ENCODE measurements at regions of chr4 and their contacts with region 1.

Region 1: GRCh38 chr4:145180298-145181090 is at the start of gene OTUD4:
- DNase-seq: peak; percentile 88 to 98 (median 94)
- ATAC-seq: peak; percentile 83
- H3K4me3 ChIP-seq: peak within 1 kb of the TSS; percentile 88
- H3K4me3 Mint-ChIP-seq: peak within 1 kb of the TSS; percentile 99
- H3K27ac ChIP-seq: peak within 1 kb of the TSS; percentile 92 to 95
- H3K27ac Mint-ChIP-seq: peak within 1 kb of the TSS; percentile 99
- H3K4me1 ChIP-seq: peaks cover 33% of the 10 kb centered on the region
- H3K4me1 Mint-ChIP-seq: peaks cover 38% of the 10 kb centered on the region
- H3K27me3 ChIP-seq: no peaks in the 10 kb centered on the region
- H3K27me3 Mint-ChIP-seq: no peaks in the 10 kb centered on the region
- CTCF ChIP-seq: no peak
- total RNA-seq, gene OTUD4: 75.1 to 81.1 TPM

Region 2: GRCh38 chr4:145097821-145098674 is 82.4 kb before region 1 on chr4 and contains the starts of genes ABCE1 and ANAPC10:
- CTCF ChIA-PET with region 1: interaction called, 3 read pairs
- POLR2A ChIA-PET with region 1: interaction called, 38 read pairs
- intact Hi-C with region 1: loop called (anchors 1 to 2 kb)
- DNase-seq: peak; percentile 88 to 100 (median 93)
- ATAC-seq: peak; percentile 89
- H3K4me3 ChIP-seq: peak within 1 kb of the TSS; percentile 93
- H3K4me3 Mint-ChIP-seq: peak within 1 kb of the TSS; percentile 95
- H3K27ac ChIP-seq: peak within 1 kb of the TSS; percentile 76 to 90
- H3K27ac Mint-ChIP-seq: peak within 1 kb of the TSS; percentile 99
- H3K4me1 ChIP-seq: peaks cover 23% of the 10 kb centered on the region
- H3K4me1 Mint-ChIP-seq: peaks cover 48% of the 10 kb centered on the region
- H3K27me3 ChIP-seq: no peaks in the 10 kb centered on the region
- H3K27me3 Mint-ChIP-seq: no peaks in the 10 kb centered on the region
- CTCF ChIP-seq: no peak
- total RNA-seq, gene ABCE1: 50.1 to 50.6 TPM
- total RNA-seq, gene ANAPC10: 25.8 to 27.5 TPM

Region 3: DNA sequence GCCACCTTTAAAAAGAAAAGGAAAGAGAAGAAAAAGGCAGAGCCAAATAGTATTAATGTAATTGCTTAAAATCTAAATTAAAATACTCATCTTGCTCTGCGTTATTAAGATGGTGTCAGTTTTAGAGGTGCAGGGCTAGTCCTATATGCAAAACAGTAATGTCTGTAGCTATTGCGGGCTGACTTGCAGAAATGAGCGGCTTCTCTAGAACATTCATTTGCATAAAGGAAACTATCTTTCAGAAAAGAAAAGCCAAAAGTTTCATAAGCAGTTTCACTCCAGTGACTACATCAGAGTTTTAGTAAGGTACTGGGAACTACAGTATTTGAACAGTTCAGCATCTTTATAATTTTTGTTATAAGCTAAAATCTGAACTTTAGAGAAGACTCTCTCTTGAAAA is 307.1 kb after region 1 on chr4:
- CTCF ChIA-PET with region 1: no interaction called
- POLR2A ChIA-PET with region 1: interaction called, 4 read pairs
- intact Hi-C with region 1: loop called (anchors 5 kb)
- DNase-seq: peak in 5 of 14 experiments; percentile 3 to 19 (median 15)
- ATAC-seq: peak; percentile 85
- H3K4me3 ChIP-seq: no peak overlapping the region
- H3K4me3 Mint-ChIP-seq: peak overlapping the region; percentile 73
- H3K27ac ChIP-seq: no peak overlapping the region
- H3K27ac Mint-ChIP-seq: no peak overlapping the region
- H3K4me1 ChIP-seq: peaks cover 4% of the 10 kb centered on the region
- H3K4me1 Mint-ChIP-seq: no peaks in the 10 kb centered on the region
- H3K27me3 ChIP-seq: peaks cover 0 to 4% of the 10 kb centered on the region in 2 experiments
- H3K27me3 Mint-ChIP-seq: no peaks in the 10 kb centered on the region
- CTCF ChIP-seq: no peak

Region 4: GRCh38 chr4:145936142-145936996 is 755.9 kb after region 1 on chr4:
- CTCF ChIA-PET with region 1: no interaction called
- POLR2A ChIA-PET with region 1: interaction called, 3 read pairs
- intact Hi-C with region 1: loop called in 1 of 2 experiments (anchors 5 kb)
- DNase-seq: peak; percentile 44 to 87 (median 64)
- ATAC-seq: peak; percentile 51
- H3K4me3 ChIP-seq: peak overlapping the region; percentile 88
- H3K4me3 Mint-ChIP-seq: peak overlapping the region; percentile 98
- H3K27ac ChIP-seq: peak overlapping the region; percentile 13 to 62
- H3K27ac Mint-ChIP-seq: peak overlapping the region; percentile 90
- H3K4me1 ChIP-seq: peaks cover 16% of the 10 kb centered on the region
- H3K4me1 Mint-ChIP-seq: peaks cover 51% of the 10 kb centered on the region
- H3K27me3 ChIP-seq: no peaks in the 10 kb centered on the region
- H3K27me3 Mint-ChIP-seq: peaks cover 5% of the 10 kb centered on the region
- CTCF ChIP-seq: peak; percentile 46

Region 5: DNA sequence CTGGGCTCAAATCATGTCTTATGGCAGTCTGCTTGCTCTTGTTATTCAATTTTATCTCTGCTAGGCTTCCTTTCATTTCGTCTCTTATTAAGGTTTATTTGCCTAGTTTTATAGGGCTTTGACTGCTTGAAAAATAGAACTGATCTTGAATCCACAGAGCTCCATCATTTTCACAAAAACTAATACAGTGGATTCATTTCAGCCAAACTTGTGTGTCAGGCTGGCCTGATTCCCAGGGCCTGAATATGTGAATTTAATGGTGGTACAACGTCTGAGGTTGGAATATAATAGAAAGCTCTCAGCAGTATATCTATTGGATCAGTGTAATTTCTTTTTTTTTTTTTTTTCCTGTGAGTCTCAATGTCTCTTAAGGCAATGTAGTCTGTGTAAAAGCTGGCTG is 1581.5 kb after region 1 on chr4:
- CTCF ChIA-PET with region 1: no interaction called
- POLR2A ChIA-PET with region 1: no interaction called
- intact Hi-C with region 1: no loop called
- DNase-seq: no peak
- ATAC-seq: no peak
- H3K4me3 ChIP-seq: no peak overlapping the region
- H3K4me3 Mint-ChIP-seq: no peak overlapping the region
- H3K27ac ChIP-seq: no peak overlapping the region
- H3K27ac Mint-ChIP-seq: no peak overlapping the region
- H3K4me1 ChIP-seq: no peaks in the 10 kb centered on the region
- H3K4me1 Mint-ChIP-seq: no peaks in the 10 kb centered on the region
- H3K27me3 ChIP-seq: peaks cover 0 to 4% of the 10 kb centered on the region in 2 experiments
- H3K27me3 Mint-ChIP-seq: no peaks in the 10 kb centered on the region
- CTCF ChIP-seq: no peak

Measured in CD4-positive, alpha-beta T cell (primary cell).